ENCODE measurements at regions of chr7 and their contacts with region 1.

Region 1: GRCh38 chr7:97016381-97017191 is 8.0 kb downstream of the DLX5 start:
- DNase-seq: peak in 1 of 2 experiments; percentile 19
- ATAC-seq: peak; percentile 67 to 83
- H3K4me3 ChIP-seq: peak overlapping the region; percentile 33
- H3K27ac ChIP-seq: no peak overlapping the region
- H3K4me1 ChIP-seq: peaks cover 9% of the 10 kb centered on the region; the same call in 2 of the 3 replicates
- CTCF ChIP-seq: no peak
- EP300 ChIP-seq: no peak
- POLR2A ChIP-seq: no peak
- RAD21 ChIP-seq: 0 out of 5 replicates have a peak, but pooled peaks of 1 of the 2 experiments have one; percentile 3

Region 2: GRCh38 chr7:96075510-96076349 is 940.9 kb before region 1 on chr7:
- CTCF ChIA-PET with region 1: interaction called, 10 read pairs
- POLR2A ChIA-PET with region 1: no interaction called
- DNase-seq: peak; percentile 53 to 74
- ATAC-seq: peak; percentile 98
- H3K4me3 ChIP-seq: peak overlapping the region; percentile 43
- H3K27ac ChIP-seq: no peak overlapping the region
- H3K4me1 ChIP-seq: peaks cover 4% of the 10 kb centered on the region; the same call in 1 of the 3 replicates
- CTCF ChIP-seq: peak; percentile 89
- EP300 ChIP-seq: no peak
- POLR2A ChIP-seq: no peak
- RAD21 ChIP-seq: peak; percentile 90 to 94

Region 3: GRCh38 chr7:97513326-97513725 is 496.7 kb after region 1 on chr7:
- CTCF ChIA-PET with region 1: no interaction called
- POLR2A ChIA-PET with region 1: no interaction called
- DNase-seq: no peak
- ATAC-seq: no peak
- H3K4me3 ChIP-seq: no peak overlapping the region
- H3K27ac ChIP-seq: no peak overlapping the region
- H3K4me1 ChIP-seq: no peaks in the 10 kb centered on the region
- CTCF ChIP-seq: no peak
- EP300 ChIP-seq: no peak
- POLR2A ChIP-seq: no peak
- RAD21 ChIP-seq: no peak

Measured in A549 (cell line).